ENCODE measurements at regions of chr5 and their contacts with region 1.

Region 1: DNA sequence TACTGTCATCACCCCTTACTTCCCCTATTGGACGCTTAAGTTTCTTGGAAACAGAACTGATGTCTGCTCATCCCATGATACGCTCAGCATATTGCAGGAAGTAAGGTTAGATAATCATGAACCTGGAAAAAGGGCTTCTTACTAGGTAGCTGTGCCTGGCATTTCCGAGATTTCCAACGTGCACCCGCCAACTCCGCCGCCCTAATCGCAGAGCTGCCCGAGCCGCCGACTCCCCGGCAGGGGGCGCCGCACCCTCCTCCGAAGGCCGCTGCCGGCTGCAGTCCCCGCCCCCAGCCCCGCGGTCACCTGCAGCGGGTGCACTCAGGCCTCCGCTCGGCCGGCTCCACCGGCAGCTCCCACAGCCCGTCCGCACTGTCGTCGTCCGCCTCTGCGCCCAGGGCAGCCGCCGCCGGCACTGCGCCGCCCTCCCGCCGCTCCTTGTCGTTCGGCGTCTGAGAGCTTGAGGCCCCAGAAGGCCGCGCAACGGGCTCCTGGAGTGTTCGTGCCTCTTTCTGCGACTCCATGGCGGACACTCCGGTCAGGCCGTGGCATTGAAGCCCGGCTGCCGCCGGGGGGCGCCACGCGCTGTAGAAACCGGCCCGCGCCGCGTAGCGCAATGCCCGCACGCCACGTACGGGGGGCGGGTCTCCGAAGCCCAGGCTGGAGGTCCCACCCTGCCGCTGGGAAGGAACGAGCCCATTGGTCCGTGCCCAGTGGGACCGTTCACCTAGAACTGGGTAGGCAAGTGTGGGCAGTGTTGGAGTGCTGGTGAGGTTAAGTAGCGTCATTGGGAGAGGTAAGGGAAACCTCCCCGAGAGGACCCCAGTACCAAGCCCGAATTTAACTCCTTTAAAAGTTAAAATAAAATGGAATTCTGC is at the start of gene DTWD2:
- DNase-seq: peak; percentile 90
- H3K4me3 Mint-ChIP-seq: peak within 1 kb of the TSS; percentile 78
- H3K27ac Mint-ChIP-seq: peak within 1 kb of the TSS; percentile 32
- H3K4me1 Mint-ChIP-seq: peaks cover 12% of the 10 kb centered on the region
- H3K27me3 Mint-ChIP-seq: no peaks in the 10 kb centered on the region
- total RNA-seq, gene DTWD2: 1.6 and 1.9 TPM in 2 replicates

Region 2: DNA sequence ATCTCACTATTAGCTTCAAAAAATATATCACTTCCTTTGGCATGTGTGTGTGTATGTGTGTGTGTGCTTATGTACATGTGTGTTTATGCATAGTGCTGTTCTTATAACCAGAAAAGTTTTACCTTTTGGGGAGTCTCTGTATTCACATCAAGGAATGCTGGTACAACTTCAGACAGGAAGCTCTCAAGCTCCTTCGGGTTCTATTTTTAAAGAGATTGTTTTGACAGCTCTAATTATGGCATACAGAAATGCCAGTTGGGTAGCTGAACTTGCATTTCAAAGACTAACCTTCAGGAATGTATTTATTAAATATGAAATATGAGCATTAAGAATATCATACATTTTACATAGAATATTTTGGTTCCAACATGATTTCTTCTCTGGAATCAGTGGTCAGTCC is 163.0 kb before region 1 on chr5:
- intact Hi-C with region 1: no loop called
- DNase-seq: no peak
- H3K4me3 Mint-ChIP-seq: no peak overlapping the region
- H3K27ac Mint-ChIP-seq: no peak overlapping the region
- H3K4me1 Mint-ChIP-seq: no peaks in the 10 kb centered on the region
- H3K27me3 Mint-ChIP-seq: no peaks in the 10 kb centered on the region

Region 3: GRCh38 chr5:119031905-119032304 is 43.7 kb after region 1 on chr5:
- intact Hi-C with region 1: loop called (anchors 2 kb)
- DNase-seq: no peak
- H3K4me3 Mint-ChIP-seq: peak overlapping the region; percentile 45
- H3K27ac Mint-ChIP-seq: peak overlapping the region; percentile 21
- H3K4me1 Mint-ChIP-seq: peaks cover 35% of the 10 kb centered on the region
- H3K27me3 Mint-ChIP-seq: peaks cover 2% of the 10 kb centered on the region

Region 4: DNA sequence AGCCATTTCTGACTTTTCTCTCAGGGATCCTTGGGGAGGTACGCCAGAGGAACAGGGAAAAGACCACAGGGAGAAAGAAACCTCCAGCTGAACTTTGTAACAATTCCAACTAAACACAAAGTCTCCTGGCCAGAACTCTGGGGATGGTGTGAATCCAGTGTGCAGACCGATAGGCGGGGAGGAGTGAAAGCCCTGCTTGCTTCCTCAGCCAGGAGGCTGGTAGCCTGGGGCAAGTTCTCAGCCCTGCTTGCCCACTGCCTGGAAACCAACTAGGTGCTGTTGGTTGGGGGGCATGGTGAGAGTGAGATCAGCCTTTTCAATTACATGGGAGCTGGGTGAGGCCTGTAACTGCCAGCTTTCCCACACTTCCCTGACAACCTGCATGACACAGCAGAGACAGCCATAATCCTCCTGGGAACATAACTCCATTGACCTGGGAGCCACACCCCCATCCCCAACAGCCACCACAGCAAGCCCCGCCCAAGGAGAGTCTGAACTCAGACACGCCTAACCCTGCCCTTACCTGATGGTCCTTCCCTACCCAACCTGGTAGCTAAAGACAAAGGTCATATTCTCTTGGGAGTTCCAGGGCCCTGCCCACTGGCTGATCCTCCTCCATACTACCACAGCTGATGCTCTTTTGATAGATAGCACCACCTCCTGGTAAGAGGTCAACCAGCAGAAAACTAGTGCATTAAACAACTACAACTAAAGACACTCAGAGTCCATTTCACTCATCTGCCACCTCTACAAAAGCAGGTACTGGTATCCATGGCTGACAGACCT is 267.5 kb after region 1 on chr5:
- intact Hi-C with region 1: loop called (anchors 1 kb)
- DNase-seq: no peak
- H3K4me3 Mint-ChIP-seq: no peak overlapping the region
- H3K27ac Mint-ChIP-seq: peak overlapping the region; percentile 22
- H3K4me1 Mint-ChIP-seq: peaks cover 10% of the 10 kb centered on the region
- H3K27me3 Mint-ChIP-seq: no peaks in the 10 kb centered on the region

Region 5: DNA sequence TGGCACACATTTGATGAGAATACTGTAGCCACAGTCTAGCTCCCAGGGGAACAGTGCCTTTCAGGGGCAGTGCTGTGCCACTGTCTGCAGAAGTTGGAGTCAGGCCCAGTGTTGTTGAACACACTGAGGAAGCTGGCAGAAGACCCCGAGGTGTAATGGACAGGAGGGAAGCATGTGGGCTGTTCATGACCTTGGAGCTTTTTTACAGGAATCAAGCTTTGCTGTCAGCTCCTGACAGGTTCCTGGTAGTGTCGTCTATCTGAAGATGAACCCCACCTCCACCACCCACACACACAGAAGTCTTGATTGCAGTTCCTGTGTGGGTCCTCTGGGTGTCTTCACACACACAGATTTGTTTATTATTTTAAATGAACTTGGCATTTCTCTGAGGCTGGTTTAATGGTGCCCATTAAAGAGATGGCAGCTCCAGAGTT is 327.3 kb after region 1 on chr5:
- intact Hi-C with region 1: loop called (anchors 1 kb)
- DNase-seq: no peak
- H3K4me3 Mint-ChIP-seq: peak overlapping the region; percentile 27
- H3K27ac Mint-ChIP-seq: peak overlapping the region; percentile 84
- H3K4me1 Mint-ChIP-seq: peaks cover 93% of the 10 kb centered on the region
- H3K27me3 Mint-ChIP-seq: no peaks in the 10 kb centered on the region

Region 6: GRCh38 chr5:119397518-119398380 is 409.5 kb after region 1 on chr5:
- intact Hi-C with region 1: loop called (anchors 1 kb)
- DNase-seq: no peak
- H3K4me3 Mint-ChIP-seq: peak overlapping the region; percentile 57
- H3K27ac Mint-ChIP-seq: peak overlapping the region; percentile 91
- H3K4me1 Mint-ChIP-seq: peaks cover 67% of the 10 kb centered on the region
- H3K27me3 Mint-ChIP-seq: no peaks in the 10 kb centered on the region

Region 7: DNA sequence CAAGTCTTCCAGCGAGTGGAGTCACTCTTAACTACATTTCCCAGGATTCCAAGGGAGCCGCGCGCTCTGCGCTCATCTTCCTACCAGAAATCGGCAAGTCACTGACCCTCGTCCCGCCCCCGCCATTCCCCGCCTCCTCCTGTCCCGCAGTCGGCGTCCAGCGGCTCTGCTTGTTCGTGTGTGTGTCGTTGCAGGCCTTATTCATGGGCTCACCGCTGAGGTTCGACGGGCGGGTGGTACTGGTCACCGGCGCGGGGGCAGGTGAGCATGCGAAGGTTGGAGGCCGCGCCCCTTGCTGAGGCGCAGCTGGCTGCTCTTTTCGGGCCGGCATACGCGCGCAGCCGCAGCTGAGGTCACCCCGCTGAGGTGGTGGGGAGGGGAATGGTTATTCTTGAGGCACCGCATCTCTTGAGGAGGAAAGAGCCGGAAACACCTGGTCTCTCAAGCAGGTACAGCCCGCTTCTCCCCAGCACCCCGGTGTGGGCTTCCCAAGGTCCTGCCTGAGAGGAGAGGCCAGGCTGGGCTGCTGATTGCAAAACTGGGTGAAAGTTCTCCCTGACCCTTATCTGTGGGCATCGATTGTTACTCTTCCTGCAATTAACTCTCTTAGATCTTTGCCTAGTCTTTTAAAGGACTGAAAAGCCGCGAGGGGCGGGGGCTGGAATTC is 464.3 kb after region 1 on chr5 and contains the start of gene HSD17B4:
- intact Hi-C with region 1: loop called (anchors 1 kb)
- DNase-seq: peak; percentile 72
- H3K4me3 Mint-ChIP-seq: peak within 1 kb of the TSS; percentile 93
- H3K27ac Mint-ChIP-seq: peak within 1 kb of the TSS; percentile 88
- H3K4me1 Mint-ChIP-seq: peaks cover 20% of the 10 kb centered on the region
- H3K27me3 Mint-ChIP-seq: peaks cover 8% of the 10 kb centered on the region
- total RNA-seq, gene HSD17B4: 65.6 and 78.2 TPM in 2 replicates